Left cardiac atrium (tissue), 4 donors: ENCODE measurements at regions of chr20 and their contacts with region 1.

Region 1: GRCh38 chr20:1212607-1213396 is 9.5 kb downstream of the C20orf202 start:
- DNase-seq: peak; percentile 79
- ATAC-seq: peak; percentile 82 to 92

Region 2: GRCh38 chr20:967796-968742 is 244.7 kb before region 1 on chr20:
- intact Hi-C with region 1: loop called in 1 of 2 experiments (anchors 10 kb)
- DNase-seq: no peak
- ATAC-seq: no peak

Region 3: DNA sequence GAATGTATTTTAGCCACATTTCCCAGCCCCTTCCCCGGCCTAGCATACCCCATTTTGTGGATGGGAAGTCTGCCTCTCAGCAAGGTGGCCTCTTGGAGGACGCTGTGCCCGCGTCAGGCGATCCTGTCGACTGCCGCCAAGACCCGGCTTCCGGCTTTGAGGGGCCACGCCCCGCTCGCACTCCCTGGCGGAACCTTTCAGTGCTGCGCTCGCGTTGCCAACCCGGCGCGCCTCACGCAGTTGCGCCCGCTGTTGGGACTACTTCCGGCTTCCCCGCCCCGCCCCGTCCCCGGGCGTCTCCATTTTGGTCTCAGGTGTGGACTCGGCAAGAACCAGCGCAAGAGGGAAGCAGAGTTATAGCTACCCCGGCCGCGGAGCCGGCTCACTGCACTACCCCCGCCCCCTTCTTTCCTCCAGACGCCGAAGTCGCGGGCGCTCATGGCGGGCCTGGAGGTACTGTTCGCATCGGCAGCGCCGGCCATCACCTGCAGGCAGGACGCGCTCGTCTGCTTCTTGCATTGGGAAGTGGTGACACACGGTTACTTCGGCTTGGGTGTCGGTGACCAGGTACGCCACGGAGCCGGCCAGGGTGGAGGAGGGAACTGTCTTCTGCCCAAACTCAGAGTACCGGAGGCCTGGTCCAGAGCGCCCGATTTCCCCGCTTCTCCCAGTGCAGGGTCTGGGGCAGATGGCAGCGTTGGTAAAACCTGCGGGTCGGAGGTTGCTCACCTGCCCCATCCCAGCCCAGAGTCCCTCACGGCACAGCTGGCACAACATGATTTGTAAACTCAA is 94.3 kb before region 1 on chr20 and contains the start of gene PSMF1:
- intact Hi-C with region 1: loop called in 1 of 2 experiments (anchors 5 kb)
- DNase-seq: peak; percentile 96
- ATAC-seq: peak; percentile 99
- total RNA-seq, gene PSMF1: 117 to 119 TPM